SK-N-SH (cell line): ENCODE measurements at regions of chr13 and their contacts with region 1.

Region 1: GRCh38 chr13:45280751-45281634 is 60.0 kb downstream of the TPT1 start:
- DNase-seq: peak; percentile 73
- H3K4me3 ChIP-seq: no peak overlapping the region
- H3K27ac ChIP-seq: no peak overlapping the region
- H3K4me1 ChIP-seq: peaks cover 0 to 4% of the 10 kb centered on the region in 2 experiments; a peak in 1 of 4 replicates
- H3K27me3 ChIP-seq: no peaks in the 10 kb centered on the region
- CTCF ChIP-seq: peak; percentile 93
- EP300 ChIP-seq: peak in 1 of 2 experiments; percentile 41; a peak in 1 of 4 replicates
- RAD21 ChIP-seq: peak; percentile 88

Region 2: GRCh38 chr13:45042539-45042938 is 238.5 kb before region 1 on chr13:
- CTCF ChIA-PET with region 1: interaction called, 69 read pairs
- POLR2A ChIA-PET with region 1: interaction called, 4 read pairs
- DNase-seq: no peak
- H3K4me3 ChIP-seq: no peak overlapping the region
- H3K27ac ChIP-seq: no peak overlapping the region
- H3K4me1 ChIP-seq: peaks cover 0 to 1% of the 10 kb centered on the region in 2 experiments; a peak in 1 of 4 replicates
- H3K27me3 ChIP-seq: no peaks in the 10 kb centered on the region
- CTCF ChIP-seq: no peak
- EP300 ChIP-seq: no peak
- RAD21 ChIP-seq: no peak

Region 3: GRCh38 chr13:45269204-45269603 is 11.8 kb before region 1 on chr13:
- CTCF ChIA-PET with region 1: interaction called, 24 read pairs
- POLR2A ChIA-PET with region 1: no interaction called
- DNase-seq: no peak
- H3K4me3 ChIP-seq: no peak overlapping the region
- H3K27ac ChIP-seq: no peak overlapping the region; a peak in 1 of 4 replicates
- H3K4me1 ChIP-seq: no peaks in the 10 kb centered on the region; a peak in 1 of 4 replicates
- H3K27me3 ChIP-seq: no peaks in the 10 kb centered on the region
- CTCF ChIP-seq: no peak
- EP300 ChIP-seq: 0 out of 4 replicates have a peak, but pooled peaks of 1 of the 2 experiments have one; percentile 9
- RAD21 ChIP-seq: no peak

Region 4: GRCh38 chr13:45297456-45298205 is 16.6 kb after region 1 on chr13:
- CTCF ChIA-PET with region 1: interaction called, 11 read pairs
- POLR2A ChIA-PET with region 1: no interaction called
- DNase-seq: no peak
- H3K4me3 ChIP-seq: no peak overlapping the region
- H3K27ac ChIP-seq: no peak overlapping the region
- H3K4me1 ChIP-seq: no peaks in the 10 kb centered on the region; a peak in 1 of 4 replicates
- H3K27me3 ChIP-seq: no peaks in the 10 kb centered on the region
- CTCF ChIP-seq: no peak
- EP300 ChIP-seq: no peak
- RAD21 ChIP-seq: no peak